ENCODE measurements at regions of chr4 and their contacts with region 1.

Region 1: GRCh38 chr4:112231779-112232713 is at the start of gene AP1AR:
- DNase-seq: peak; percentile 44 to 89
- H3K4me3 ChIP-seq: peak within 1 kb of the TSS; percentile 83 to 97
- H3K27ac ChIP-seq: peak within 1 kb of the TSS; percentile 93 to 95
- H3K4me1 ChIP-seq: peaks cover 6% of the 10 kb centered on the region in 2 donors
- H3K27me3 ChIP-seq: no peaks in the 10 kb centered on the region
- CTCF ChIP-seq: peak in 2 of 3 experiments; percentile 36 to 38
- total RNA-seq, gene AP1AR: 7.0 TPM

Region 2: GRCh38 chr4:112099701-112100297 is 132.2 kb before region 1 on chr4:
- intact Hi-C with region 1: loop called (anchors 1 kb)
- DNase-seq: no peak
- H3K4me3 ChIP-seq: no peak overlapping the region
- H3K27ac ChIP-seq: no peak overlapping the region
- H3K4me1 ChIP-seq: no peaks in the 10 kb centered on the region
- H3K27me3 ChIP-seq: no peaks in the 10 kb centered on the region
- CTCF ChIP-seq: peak; percentile 32 to 68 (median 63)

Region 3: GRCh38 chr4:112145326-112145819 is 86.7 kb before region 1 on chr4 and contains the start of gene FAM241A:
- intact Hi-C with region 1: loop called (anchors 1 kb)
- DNase-seq: peak; percentile 62 to 94
- H3K4me3 ChIP-seq: peak within 1 kb of the TSS; percentile 76 to 96
- H3K27ac ChIP-seq: peak within 1 kb of the TSS; percentile 77 to 89
- H3K4me1 ChIP-seq: peaks cover 0 to 5% of the 10 kb centered on the region in 2 donors
- H3K27me3 ChIP-seq: no peaks in the 10 kb centered on the region
- CTCF ChIP-seq: no peak
- total RNA-seq, gene FAM241A: 6.8 TPM

Region 4: DNA sequence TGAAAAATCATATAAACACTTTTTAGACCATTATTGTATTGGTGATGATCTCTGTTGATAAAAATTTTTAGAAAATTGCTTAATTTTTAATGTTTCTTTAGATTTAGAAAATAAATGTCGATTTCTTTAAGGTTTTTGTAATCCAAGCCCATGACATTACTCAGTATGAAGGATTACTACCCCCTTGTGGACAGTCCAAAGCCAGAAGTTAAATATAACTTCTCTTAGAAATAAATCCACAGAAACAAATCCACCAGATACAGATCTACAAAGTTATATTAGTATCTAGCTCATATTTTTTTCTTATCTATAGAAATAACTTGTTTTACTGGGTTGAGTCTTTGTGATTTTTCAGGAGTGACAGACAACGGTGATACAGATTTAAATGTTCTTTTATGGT is 34.8 kb after region 1 on chr4:
- intact Hi-C with region 1: no loop called
- DNase-seq: no peak
- H3K4me3 ChIP-seq: no peak overlapping the region
- H3K27ac ChIP-seq: no peak overlapping the region
- H3K4me1 ChIP-seq: no peaks in the 10 kb centered on the region
- H3K27me3 ChIP-seq: no peaks in the 10 kb centered on the region
- CTCF ChIP-seq: peak in 2 of 3 experiments; percentile 30 to 56

Region 5: DNA sequence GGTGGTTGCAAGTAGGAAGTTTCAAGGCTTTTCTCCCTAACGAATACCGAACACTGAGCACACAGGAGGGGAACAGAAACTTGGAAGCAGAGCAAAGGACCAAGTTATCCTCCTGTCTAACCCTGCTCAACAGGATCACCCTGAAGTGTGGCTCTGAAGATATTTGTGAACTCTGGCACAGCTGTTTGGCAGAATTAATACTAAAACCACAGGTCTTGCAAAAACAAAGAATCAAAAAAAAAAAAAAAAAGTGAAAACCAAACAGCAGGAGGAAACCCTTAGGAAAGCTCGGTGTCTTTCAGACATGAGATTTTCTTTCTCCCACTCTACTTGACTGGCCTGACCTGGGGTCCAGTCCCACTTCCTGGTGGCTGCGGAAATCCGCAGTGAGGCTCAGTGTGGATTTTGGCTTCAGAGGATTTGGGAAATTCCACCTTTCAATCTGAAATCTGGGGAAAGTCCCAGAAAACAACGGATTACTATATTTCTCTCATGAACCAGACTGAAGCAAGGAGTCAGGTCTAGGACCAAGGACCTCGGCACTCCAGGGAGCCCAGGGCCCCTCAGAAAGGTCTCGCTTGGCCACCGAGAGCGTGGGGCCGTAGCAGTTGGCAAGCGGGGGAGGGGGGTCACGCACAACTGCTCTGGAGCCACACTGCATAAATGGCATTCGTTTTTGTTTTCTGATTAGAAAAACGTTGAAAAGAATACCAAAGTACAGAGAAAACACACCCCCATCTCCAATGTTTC is 52.8 kb after region 1 on chr4:
- intact Hi-C with region 1: loop called (anchors 1 kb)
- DNase-seq: no peak
- H3K4me3 ChIP-seq: peak overlapping the region; percentile 75 to 82
- H3K27ac ChIP-seq: peak overlapping the region; percentile 80 to 82
- H3K4me1 ChIP-seq: peaks cover 0 to 5% of the 10 kb centered on the region in 2 donors
- H3K27me3 ChIP-seq: no peaks in the 10 kb centered on the region
- CTCF ChIP-seq: no peak

Region 6: GRCh38 chr4:112296949-112297880 is 65.2 kb after region 1 on chr4 and contains the start of gene ALPK1:
- intact Hi-C with region 1: loop called (anchors 1 kb)
- DNase-seq: no peak
- H3K4me3 ChIP-seq: peak within 1 kb of the TSS; percentile 53 to 59
- H3K27ac ChIP-seq: peak within 1 kb of the TSS; percentile 72 to 84
- H3K4me1 ChIP-seq: peaks cover 0 to 9% of the 10 kb centered on the region in 2 donors
- H3K27me3 ChIP-seq: no peaks in the 10 kb centered on the region
- CTCF ChIP-seq: no peak
- total RNA-seq, gene ALPK1: 8.7 TPM

Region 7: GRCh38 chr4:112422644-112423043 is 190.6 kb after region 1 on chr4:
- intact Hi-C with region 1: no loop called
- DNase-seq: no peak
- H3K4me3 ChIP-seq: no peak overlapping the region
- H3K27ac ChIP-seq: no peak overlapping the region
- H3K4me1 ChIP-seq: no peaks in the 10 kb centered on the region
- H3K27me3 ChIP-seq: no peaks in the 10 kb centered on the region
- CTCF ChIP-seq: no peak

Region 8: DNA sequence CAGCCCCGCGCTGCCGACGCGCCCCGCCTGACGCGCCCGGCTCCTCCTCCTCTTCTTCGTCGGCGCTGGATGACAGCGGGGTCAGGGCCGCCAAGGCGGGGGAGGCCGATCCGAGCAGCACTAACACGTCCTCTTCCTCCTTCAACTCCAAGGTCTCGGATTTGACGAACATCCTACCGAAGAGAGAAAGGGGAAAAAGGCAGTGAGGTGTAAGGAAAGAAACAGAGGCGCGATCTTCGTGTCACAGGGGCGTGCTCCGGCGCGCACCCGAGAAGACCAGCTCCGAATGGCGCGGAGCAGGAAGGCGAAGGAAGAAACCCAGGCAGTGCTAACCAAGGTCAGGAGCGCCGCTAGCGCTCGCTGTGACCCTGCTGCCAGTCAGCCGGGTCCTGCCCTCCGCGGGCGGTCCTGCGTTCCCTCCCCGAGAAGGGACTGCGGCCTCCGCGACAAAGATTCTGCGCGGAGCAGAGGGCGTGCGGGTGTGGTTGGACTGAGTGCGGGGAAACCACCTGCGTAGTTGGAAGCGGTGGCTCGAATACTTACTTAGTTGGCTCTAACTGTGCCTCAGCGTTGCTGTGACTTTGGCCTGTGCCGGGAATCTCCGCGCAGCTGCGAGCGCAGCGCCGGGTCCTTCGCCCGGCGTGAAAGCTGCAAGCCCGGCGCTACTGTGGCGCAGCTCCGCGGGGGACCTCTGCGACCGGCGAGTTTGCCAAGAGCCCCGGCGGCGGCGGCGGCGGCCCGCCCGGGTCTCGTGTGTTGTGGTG is 283.4 kb after region 1 on chr4:
- intact Hi-C with region 1: loop called (anchors 5 kb)
- DNase-seq: no peak
- H3K4me3 ChIP-seq: peak overlapping the region; percentile 64
- H3K27ac ChIP-seq: no peak overlapping the region
- H3K4me1 ChIP-seq: peaks cover 9 to 23% of the 10 kb centered on the region in 2 donors
- H3K27me3 ChIP-seq: peaks cover 57% of the 10 kb centered on the region
- CTCF ChIP-seq: no peak

Region 9: DNA sequence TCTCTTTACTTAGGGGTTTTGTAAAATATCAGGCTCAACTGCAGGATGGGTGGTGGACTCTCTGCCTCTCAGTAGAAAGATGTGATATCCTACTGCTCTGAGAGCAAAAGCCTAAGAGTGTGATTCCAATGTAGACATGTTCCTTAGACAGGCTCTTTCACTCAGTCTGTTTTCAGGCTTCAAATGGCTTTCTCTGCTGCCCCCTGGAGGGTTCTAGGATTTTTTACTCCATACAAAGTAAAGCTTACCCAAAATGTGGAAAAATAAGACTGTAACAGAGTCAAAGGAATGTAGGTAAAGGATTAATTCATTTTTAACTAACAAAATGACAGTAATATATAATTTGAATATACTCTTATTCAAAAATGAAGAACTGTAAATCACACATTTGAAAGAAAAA is 372.5 kb after region 1 on chr4:
- intact Hi-C with region 1: no loop called
- DNase-seq: no peak
- H3K4me3 ChIP-seq: no peak overlapping the region
- H3K27ac ChIP-seq: no peak overlapping the region
- H3K4me1 ChIP-seq: no peaks in the 10 kb centered on the region
- H3K27me3 ChIP-seq: no peaks in the 10 kb centered on the region
- CTCF ChIP-seq: peak; percentile 26 to 58 (median 37)

Region 10: DNA sequence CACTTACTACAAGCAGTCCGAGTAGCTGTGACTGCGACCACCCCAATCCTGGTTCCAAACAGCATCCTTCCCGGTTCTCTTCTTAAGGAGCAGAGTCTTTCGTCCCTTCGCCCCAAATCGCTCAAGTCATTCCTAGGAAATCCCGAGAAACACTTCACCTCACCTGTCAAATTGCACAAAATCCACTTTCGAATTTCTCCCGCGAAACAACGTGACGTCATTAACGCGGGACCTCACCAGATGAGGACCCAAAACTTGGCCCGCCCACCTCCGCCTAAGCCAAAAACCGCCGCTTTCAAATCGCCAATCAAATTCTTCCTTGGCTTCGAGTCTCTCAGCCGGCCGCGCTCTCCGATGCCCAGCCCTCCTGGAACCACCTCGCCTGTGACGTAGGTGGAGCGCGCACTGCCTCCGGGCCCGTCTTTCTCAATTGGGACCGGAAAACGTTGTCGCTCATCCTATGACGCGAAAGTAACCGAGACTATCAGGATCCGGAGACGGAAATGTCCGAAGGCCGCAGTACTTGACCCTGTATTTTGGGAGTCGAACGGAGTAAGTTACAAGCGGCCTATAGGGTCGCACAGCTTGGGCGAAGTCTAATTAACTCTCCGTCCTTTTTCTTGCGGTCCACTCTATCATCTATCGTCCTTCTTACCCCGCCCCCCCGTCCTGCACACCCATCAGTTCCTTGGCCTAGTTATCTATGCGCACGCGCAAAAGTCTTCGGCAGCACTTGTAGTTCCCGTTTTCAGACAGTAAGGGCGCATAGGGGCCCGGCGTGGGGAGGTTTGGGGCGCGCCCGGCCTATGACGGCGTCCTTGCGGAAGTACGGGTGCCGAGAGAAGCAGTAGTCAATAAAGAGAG is 404.9 kb after region 1 on chr4 and contains the starts of genes LARP7 and ZGRF1:
- intact Hi-C with region 1: loop called (anchors 1 kb)
- DNase-seq: peak; percentile 97 to 100
- H3K4me3 ChIP-seq: peak within 1 kb of the TSS; percentile 67 to 82
- H3K27ac ChIP-seq: peak within 1 kb of the TSS; percentile 94 to 98
- H3K4me1 ChIP-seq: peaks cover 0 to 11% of the 10 kb centered on the region in 2 donors
- H3K27me3 ChIP-seq: no peaks in the 10 kb centered on the region
- CTCF ChIP-seq: peak; percentile 97 to 100 (median 99)
- total RNA-seq, gene LARP7: 7.3 TPM
- total RNA-seq, gene ZGRF1: 0.11 TPM

Measured in ascending aorta (tissue), 2 donors.